Aorta (tissue), 5 donors: ENCODE measurements at regions of chr3 and their contacts with region 1.

Region 1: GRCh38 chr3:138915503-138916498 is 31.1 kb downstream of the FOXL2 start:
- DNase-seq: peak; percentile 96 to 99
- ATAC-seq: peak; percentile 99
- H3K4me3 ChIP-seq: peak overlapping the region; percentile 35 to 68
- H3K27ac ChIP-seq: peak overlapping the region; percentile 34 to 82
- H3K4me1 ChIP-seq: no peaks in the 10 kb centered on the region
- H3K27me3 ChIP-seq: no peaks in the 10 kb centered on the region

Region 2: DNA sequence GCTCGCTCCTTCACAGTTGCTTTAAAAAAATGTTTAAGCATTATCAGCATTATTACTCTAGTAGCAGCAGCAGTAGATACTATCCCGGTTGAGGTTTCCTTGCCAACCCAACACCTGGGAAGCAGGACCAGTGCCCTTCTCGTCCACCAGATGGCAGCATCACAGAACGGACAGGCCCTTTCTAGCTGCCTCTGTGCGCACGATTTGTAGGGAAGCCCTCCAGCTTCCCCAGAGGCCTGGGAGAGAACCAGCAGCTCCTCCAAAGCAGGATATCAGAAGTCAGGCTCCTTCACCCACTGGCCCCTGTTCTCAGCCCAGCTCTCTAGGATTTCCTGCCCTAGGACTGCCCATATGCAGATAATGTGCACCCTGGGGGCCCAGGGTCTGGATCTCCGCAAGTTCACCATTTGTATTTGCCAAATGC is 498.2 kb before region 1 on chr3:
- intact Hi-C with region 1: loop called (anchors 5 to 10 kb)
- DNase-seq: peak; percentile 79 to 88
- ATAC-seq: peak; percentile 84
- H3K4me3 ChIP-seq: no peak overlapping the region
- H3K27ac ChIP-seq: no peak overlapping the region
- H3K4me1 ChIP-seq: no peaks in the 10 kb centered on the region
- H3K27me3 ChIP-seq: no peaks in the 10 kb centered on the region

Region 3: DNA sequence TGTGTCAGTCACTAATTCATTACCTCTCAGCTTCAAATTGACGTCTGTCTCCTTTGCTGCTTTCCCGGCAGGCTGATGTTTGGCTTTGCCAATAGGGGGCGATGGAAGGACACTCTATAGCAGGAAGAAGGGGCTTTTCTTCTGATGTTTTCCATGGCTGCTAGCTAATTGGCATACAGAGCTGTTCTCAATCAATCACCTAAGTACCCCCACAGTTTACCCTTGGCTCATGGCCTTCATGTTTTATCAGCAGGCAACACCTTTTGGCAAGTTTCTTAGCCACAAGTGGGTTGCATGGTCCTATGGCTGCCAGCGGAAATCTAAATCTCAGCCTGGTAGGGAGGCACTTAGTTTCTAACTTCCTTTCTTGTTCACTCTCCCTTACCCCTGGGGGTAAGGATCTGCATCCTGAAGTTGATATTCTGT is 436.4 kb before region 1 on chr3:
- intact Hi-C with region 1: loop called in 1 of 2 experiments (anchors 10 kb)
- DNase-seq: peak in 1 of 2 donors; percentile 36
- ATAC-seq: no peak
- H3K4me3 ChIP-seq: no peak overlapping the region
- H3K27ac ChIP-seq: no peak overlapping the region
- H3K4me1 ChIP-seq: peaks cover 1 to 4% of the 10 kb centered on the region in 2 donors
- H3K27me3 ChIP-seq: no peaks in the 10 kb centered on the region

Region 4: GRCh38 chr3:138493804-138494606 is 421.8 kb before region 1 on chr3:
- intact Hi-C with region 1: no loop called
- DNase-seq: no peak
- ATAC-seq: no peak
- H3K4me3 ChIP-seq: no peak overlapping the region
- H3K27ac ChIP-seq: no peak overlapping the region
- H3K4me1 ChIP-seq: peaks cover 0 to 2% of the 10 kb centered on the region in 2 donors
- H3K27me3 ChIP-seq: no peaks in the 10 kb centered on the region

Region 5: DNA sequence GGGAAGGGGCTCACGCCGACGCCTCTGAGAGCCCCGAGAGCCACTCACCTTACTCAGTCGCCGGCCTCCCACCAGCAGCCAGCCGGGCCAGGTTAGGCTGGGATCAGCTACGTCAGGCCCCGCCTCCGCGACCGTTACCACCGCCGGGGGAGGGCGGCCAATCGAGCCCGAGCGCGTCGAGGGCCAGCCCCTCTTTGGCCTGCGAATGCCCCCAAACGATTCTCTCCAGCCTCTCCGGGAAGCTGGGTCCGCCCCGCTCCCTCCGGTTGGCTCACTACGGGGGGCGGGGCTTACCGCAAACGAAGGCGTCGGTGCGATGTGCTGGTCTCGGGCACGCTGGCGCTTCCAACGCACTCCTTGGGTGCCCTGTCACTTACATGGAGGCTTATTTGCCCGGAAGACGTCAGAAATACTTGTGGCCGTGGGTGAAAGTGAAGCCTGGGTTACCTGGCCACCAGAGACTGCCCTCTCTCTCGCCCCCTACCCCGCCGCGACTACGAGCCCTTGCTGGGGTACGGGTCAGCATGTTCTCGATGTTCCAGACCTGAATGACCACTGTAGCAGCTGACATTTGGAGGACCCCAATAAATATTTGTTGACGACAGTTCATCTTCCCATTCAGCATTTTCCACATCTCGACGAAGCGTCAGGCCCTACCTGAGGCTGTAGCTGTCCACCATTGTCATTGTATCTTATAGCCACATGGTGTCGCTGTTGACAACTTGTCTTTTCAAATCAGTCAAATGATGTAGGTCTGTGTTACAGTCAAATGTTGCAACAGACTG is 321.5 kb before region 1 on chr3 and contains the start of gene CEP70:
- intact Hi-C with region 1: loop called (anchors 1 to 5 kb)
- DNase-seq: peak; percentile 96 to 97
- ATAC-seq: peak; percentile 99
- H3K4me3 ChIP-seq: peak within 1 kb of the TSS; percentile 51 to 58
- H3K27ac ChIP-seq: peak within 1 kb of the TSS; percentile 43 to 80
- H3K4me1 ChIP-seq: no peaks in the 10 kb centered on the region
- H3K27me3 ChIP-seq: no peaks in the 10 kb centered on the region
- total RNA-seq, gene CEP70: 27.9 to 49.5 TPM

Region 6: DNA sequence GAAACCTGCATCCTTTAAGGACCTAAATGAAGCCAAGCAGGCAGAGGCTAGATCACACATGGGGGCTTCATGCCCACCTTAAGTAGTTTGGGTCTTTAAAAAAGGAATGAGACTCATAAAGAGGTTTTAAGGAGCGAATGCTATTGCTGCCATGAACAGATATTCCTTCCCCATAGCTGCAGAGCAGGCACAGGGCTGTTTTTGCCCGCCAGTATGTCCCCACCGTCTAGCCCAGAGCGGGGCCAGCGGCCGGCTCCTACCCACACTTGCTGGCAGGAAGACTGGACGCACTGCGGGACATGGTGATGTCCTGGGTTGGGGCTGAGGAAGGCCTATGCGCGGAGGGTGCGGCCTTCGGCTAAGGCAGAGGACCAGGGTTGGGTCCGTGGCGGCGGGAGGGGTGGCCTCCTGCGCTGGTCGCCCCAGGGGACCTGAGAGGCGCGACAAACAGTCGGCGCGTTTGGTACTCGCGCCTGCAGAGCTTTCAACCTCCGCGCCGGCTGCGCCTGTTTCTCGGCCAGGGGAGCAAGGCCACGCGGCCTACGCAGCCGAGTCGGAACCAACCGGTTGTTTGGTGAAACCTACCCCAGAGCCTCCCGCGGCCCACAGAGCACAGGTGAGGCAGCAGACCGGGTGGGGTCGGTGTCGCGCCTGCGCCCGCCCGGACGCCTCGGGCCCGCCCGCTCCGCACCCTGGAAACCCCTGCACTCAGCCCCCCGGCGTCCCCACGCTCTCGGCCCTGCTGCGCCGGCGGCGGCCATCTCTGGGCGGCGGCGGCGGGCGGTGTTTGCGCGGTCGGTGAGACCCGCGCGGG is 307.3 kb before region 1 on chr3 and contains the start of gene FAIM:
- intact Hi-C with region 1: loop called in 1 of 2 experiments (anchors 5 kb)
- DNase-seq: peak; percentile 81 to 90
- ATAC-seq: peak; percentile 85
- H3K4me3 ChIP-seq: peak within 1 kb of the TSS; percentile 59 to 76
- H3K27ac ChIP-seq: peak within 1 kb of the TSS; percentile 78 to 97
- H3K4me1 ChIP-seq: no peaks in the 10 kb centered on the region
- H3K27me3 ChIP-seq: no peaks in the 10 kb centered on the region
- total RNA-seq, gene FAIM: 7.0 to 12.6 TPM

Region 7: GRCh38 chr3:138694287-138695007 is 221.4 kb before region 1 on chr3:
- intact Hi-C with region 1: loop called (anchors 5 kb)
- DNase-seq: no peak
- ATAC-seq: no peak
- H3K4me3 ChIP-seq: no peak overlapping the region
- H3K27ac ChIP-seq: no peak overlapping the region
- H3K4me1 ChIP-seq: peaks cover 0 to 3% of the 10 kb centered on the region in 2 donors
- H3K27me3 ChIP-seq: no peaks in the 10 kb centered on the region

Region 8: GRCh38 chr3:138834359-138835212 is 81.2 kb before region 1 on chr3 and contains the start of gene PIK3CB:
- intact Hi-C with region 1: loop called (anchors 2 to 5 kb)
- DNase-seq: peak; percentile 94 to 97
- ATAC-seq: peak; percentile 99
- H3K4me3 ChIP-seq: peak within 1 kb of the TSS; percentile 75 to 86
- H3K27ac ChIP-seq: peak within 1 kb of the TSS; percentile 96 to 97
- H3K4me1 ChIP-seq: no peaks in the 10 kb centered on the region
- H3K27me3 ChIP-seq: no peaks in the 10 kb centered on the region
- total RNA-seq, gene PIK3CB: 27.2 to 29.8 TPM

Region 9: DNA sequence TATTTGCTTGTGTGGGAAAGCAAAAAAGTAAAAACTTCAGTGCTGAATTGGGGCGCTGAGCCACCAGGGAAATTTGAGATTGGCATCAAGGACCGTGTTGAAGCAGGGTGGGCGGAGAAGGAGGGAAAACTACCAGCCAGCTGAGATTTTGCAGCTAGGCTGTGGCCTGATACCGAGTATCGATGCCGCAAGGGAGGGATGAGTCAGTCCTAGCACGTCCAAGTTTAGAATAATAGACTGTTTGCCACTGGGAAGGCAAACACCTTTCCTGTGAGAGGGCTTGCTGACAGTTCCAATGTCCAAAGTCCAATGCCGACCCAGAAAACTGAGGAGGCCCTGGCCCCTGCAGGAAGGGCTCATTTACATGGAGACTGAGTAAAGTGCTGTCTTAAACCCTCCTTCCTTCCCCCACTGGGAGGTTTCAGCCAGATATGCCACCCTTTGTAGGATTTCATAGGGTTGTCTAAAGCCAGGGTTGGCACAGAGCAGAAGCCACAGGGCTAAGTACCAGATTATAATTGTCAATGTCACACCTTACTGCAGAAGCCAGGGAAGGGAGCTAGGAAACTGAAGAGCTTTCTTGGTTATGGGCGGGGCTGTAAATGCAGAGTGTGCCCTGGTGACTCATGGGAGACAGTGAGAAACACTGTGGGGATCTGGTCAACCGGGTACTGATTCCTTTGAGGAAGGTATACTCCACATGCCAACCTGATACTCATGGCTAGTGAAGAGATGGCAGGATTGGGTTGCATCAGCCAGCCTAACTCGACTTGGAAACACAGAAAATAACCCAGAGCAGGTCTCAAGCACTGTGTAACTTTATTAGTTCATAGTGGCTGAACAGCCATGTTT is 52.7 kb before region 1 on chr3:
- intact Hi-C with region 1: no loop called
- DNase-seq: no peak
- ATAC-seq: peak; percentile 63
- H3K4me3 ChIP-seq: no peak overlapping the region
- H3K27ac ChIP-seq: no peak overlapping the region
- H3K4me1 ChIP-seq: no peaks in the 10 kb centered on the region
- H3K27me3 ChIP-seq: no peaks in the 10 kb centered on the region